Activated CD4-positive, alpha-beta T cell treated with anti-CD3 and anti-CD28 coated beads for 36 hours (primary cell): ENCODE measurements at regions of chr1 and their contacts with region 1.

Region 1: GRCh38 chr1:240888039-240888786 is 276.3 kb upstream of the GREM2 start:
- DNase-seq: peak; percentile 65
- ATAC-seq: no peak
- H3K4me3 Mint-ChIP-seq: no peak overlapping the region
- H3K27ac Mint-ChIP-seq: no peak overlapping the region
- H3K4me1 Mint-ChIP-seq: no peaks in the 10 kb centered on the region
- H3K27me3 Mint-ChIP-seq: no peaks in the 10 kb centered on the region

Region 2: DNA sequence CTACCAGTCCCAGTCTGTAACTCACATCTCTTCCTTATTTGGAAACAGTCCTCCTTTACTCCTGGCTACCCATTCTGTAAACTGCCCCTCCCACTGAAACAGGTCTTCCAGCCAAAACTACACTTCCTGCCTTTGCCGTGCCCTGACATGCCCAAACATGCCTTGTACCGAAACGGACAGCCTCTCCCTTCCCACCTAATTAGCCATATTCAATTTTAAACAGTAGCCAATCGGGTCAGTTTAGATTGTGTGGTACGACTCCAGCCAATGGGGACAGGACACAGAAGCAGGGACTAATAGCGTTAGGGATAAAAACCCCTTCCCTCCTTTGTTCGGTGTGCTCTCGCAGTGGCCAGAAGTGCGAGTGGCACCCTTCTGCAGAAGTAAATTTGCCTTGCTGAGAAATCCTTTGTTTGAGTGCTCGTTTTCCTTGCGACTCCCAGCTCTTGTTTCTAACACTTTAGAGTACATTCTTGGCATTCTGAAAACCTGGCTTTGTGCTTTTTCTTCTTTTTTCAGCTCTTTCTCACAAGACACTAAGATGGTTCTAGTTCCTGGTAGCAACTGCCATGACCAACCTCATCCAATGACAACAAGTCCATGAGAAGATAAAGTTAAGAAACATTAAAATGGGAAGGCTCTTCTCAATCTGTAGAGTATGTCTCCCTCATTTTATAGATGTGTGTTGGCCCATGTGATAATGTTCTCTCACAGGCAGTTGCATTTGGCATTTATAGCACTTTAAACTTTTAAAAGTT is 48.9 kb after region 1 on chr1:
- CTCF ChIA-PET with region 1: no interaction called
- POLR2A ChIA-PET with region 1: no interaction called
- intact Hi-C with region 1: no loop called
- DNase-seq: no peak
- ATAC-seq: no peak
- H3K4me3 Mint-ChIP-seq: no peak overlapping the region
- H3K27ac Mint-ChIP-seq: no peak overlapping the region
- H3K4me1 Mint-ChIP-seq: no peaks in the 10 kb centered on the region
- H3K27me3 Mint-ChIP-seq: no peaks in the 10 kb centered on the region

Region 3: GRCh38 chr1:241499910-241500309 is 611.7 kb after region 1 on chr1:
- CTCF ChIA-PET with region 1: no interaction called
- POLR2A ChIA-PET with region 1: no interaction called
- intact Hi-C with region 1: loop called in 1 of 2 experiments (anchors 5 kb)
- DNase-seq: no peak
- ATAC-seq: no peak
- H3K4me3 Mint-ChIP-seq: no peak overlapping the region
- H3K27ac Mint-ChIP-seq: no peak overlapping the region
- H3K4me1 Mint-ChIP-seq: peaks cover 10% of the 10 kb centered on the region
- H3K27me3 Mint-ChIP-seq: no peaks in the 10 kb centered on the region